Psoas muscle (tissue), 8 donors: ENCODE measurements at regions of chr7 and their contacts with region 1.

Region 1: GRCh38 chr7:37833107-37833817 is 15.1 kb upstream of the NME8 start:
- DNase-seq: peak; percentile 17 to 50
- ATAC-seq: peak in 2 of 4 donors; percentile 47 to 73
- H3K4me3 ChIP-seq: peak overlapping the region; percentile 50
- H3K27ac ChIP-seq: no peak overlapping the region
- H3K4me1 ChIP-seq: no peaks in the 10 kb centered on the region
- H3K27me3 ChIP-seq: no peaks in the 10 kb centered on the region
- CTCF ChIP-seq: peak; percentile 67

Region 2: DNA sequence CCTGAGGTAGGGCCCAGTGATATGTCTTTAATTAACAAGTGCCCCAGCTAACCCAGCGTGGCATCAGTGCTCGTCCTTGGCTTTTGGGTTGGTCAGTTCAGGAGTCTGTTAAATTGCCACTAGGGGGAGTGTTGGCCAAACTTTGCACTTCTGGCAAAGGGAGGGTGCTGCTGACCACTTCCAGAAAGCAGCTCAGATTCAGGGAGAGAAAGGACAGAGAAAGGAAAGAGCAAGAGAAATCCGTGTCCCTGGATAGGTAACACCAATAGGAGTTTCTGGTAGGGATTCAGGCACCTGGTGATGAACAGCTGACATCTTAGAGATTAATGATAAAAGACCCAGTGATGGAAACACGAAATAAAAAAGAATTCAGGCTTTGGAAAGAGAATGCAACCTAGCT is 865.9 kb before region 1 on chr7:
- intact Hi-C with region 1: loop called in 1 of 2 experiments (anchors 10 kb)
- DNase-seq: peak in 1 of 2 donors; percentile 36
- ATAC-seq: peak; percentile 75 to 93 (median 85)
- H3K4me3 ChIP-seq: no peak overlapping the region
- H3K27ac ChIP-seq: no peak overlapping the region
- H3K4me1 ChIP-seq: peaks cover 3% of the 10 kb centered on the region
- H3K27me3 ChIP-seq: no peaks in the 10 kb centered on the region
- CTCF ChIP-seq: peak; percentile 81

Region 3: DNA sequence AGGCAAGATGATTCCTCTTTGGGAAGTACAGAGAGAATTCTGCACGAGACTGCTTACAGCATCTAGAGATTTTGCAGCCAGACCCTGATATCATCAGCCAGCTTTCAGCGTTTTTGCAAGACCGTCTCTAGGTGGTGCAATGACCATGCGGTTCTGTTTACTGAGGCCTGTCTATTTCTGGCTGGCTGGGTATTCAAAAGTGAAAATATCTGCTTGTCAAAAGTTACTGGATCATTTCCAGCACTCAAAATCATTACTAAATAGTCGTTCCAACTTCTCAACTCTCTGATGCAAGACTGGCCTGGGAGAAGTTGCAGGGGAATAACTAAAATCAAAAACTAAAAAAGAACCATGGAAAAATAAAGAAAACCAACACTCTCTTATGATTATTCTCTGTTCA is 624.7 kb before region 1 on chr7:
- intact Hi-C with region 1: loop called in 1 of 2 experiments (anchors 5 kb)
- DNase-seq: peak; percentile 60 to 63
- ATAC-seq: peak; percentile 69 to 96 (median 91)
- H3K4me3 ChIP-seq: no peak overlapping the region
- H3K27ac ChIP-seq: no peak overlapping the region
- H3K4me1 ChIP-seq: peaks cover 5% of the 10 kb centered on the region
- H3K27me3 ChIP-seq: no peaks in the 10 kb centered on the region
- CTCF ChIP-seq: peak; percentile 21

Region 4: GRCh38 chr7:37234928-37235327 is 598.3 kb before region 1 on chr7:
- intact Hi-C with region 1: loop called in 1 of 2 experiments (anchors 10 kb)
- DNase-seq: no peak
- ATAC-seq: no peak
- H3K4me3 ChIP-seq: no peak overlapping the region
- H3K27ac ChIP-seq: no peak overlapping the region
- H3K4me1 ChIP-seq: no peaks in the 10 kb centered on the region
- H3K27me3 ChIP-seq: no peaks in the 10 kb centered on the region
- CTCF ChIP-seq: peak; percentile 36

Region 5: DNA sequence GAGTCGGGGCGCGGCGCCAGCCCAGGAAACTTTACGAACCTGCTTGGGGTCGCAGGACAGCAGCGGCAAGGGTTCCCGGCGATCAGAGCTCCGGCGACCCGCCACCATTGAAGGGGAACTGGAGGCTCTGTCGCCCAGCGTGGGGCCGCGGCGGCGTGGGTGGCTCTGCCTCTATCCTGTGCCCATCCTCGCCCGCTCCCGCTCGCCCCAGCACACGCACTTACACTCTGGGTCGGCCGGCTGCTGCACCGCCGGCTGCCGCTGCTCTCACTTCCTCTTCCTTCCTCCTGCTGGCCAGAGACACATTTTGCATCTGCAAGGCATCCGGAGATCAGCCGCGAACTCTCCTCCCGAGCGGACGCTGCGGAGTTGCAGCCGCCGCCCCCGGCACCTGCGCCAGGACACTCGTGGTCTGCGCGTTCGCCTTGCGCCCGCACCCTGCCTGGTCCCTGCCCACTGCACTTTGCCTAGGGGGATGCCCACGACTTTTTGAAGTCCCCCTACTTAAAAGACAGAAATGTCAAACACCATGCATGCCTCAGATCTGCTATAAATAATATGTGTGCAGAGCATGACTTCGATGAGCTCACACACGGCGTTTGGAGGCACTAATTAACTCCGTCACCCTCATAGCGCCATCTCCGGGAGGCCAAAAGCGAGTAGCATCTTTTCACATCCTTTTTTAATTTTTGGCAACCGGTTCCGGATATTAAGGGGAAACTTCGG is 384.5 kb before region 1 on chr7 and contains the start of gene ELMO1:
- intact Hi-C with region 1: loop called in 1 of 2 experiments (anchors 5 kb)
- DNase-seq: peak; percentile 76 to 84
- ATAC-seq: peak; percentile 56 to 79 (median 74)
- H3K4me3 ChIP-seq: peak within 1 kb of the TSS; percentile 74
- H3K27ac ChIP-seq: peak within 1 kb of the TSS; percentile 71
- H3K4me1 ChIP-seq: peaks cover 11% of the 10 kb centered on the region
- H3K27me3 ChIP-seq: peaks cover 0 to 20% (median 10%) of the 10 kb centered on the region in 3 donors
- CTCF ChIP-seq: peak; percentile 31
- total RNA-seq, gene ELMO1: 6.9 to 8.1 (median 7.3) TPM

Region 6: DNA sequence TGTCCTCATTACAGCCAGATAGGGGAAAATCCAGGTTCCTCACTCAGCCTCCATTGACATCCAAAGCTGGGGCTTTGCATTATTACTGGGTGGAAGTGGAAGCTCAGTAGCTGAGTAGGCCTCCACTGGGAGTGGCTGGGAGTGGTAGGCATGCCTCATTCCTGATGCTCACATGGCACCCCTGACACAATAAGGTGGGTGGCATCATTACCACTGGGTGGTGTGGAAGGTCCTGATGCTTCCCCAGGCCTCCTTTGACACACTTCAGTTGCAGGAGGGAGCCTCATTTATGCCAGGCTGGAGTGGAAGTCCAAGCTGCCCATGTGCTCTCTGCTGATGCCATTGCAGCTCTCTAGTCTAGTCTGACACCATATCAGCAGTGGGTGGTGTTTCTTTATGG is 197.9 kb before region 1 on chr7:
- intact Hi-C with region 1: loop called in 1 of 2 experiments (anchors 10 kb)
- DNase-seq: no peak
- ATAC-seq: no peak
- H3K4me3 ChIP-seq: no peak overlapping the region
- H3K27ac ChIP-seq: no peak overlapping the region
- H3K4me1 ChIP-seq: no peaks in the 10 kb centered on the region
- H3K27me3 ChIP-seq: no peaks in the 10 kb centered on the region
- CTCF ChIP-seq: no peak

Region 7: DNA sequence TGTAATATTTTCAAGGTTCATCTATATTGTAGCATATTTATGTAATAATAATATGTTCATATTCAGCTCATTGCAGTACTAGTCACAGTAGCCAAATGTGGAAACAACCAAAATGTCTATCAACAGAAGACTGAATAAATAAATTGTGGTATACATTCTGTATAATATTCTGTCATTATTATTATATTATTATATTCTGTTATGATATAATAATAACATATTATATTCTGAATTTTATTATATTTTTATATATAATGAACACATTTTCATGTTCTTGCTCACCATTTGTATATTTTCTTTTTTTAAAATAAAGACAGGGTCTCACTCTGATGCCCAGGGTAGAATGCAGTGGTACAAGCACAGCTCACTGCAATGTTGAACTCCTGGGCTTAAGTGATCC is 253.6 kb after region 1 on chr7:
- intact Hi-C with region 1: no loop called
- DNase-seq: no peak
- ATAC-seq: no peak
- H3K4me3 ChIP-seq: no peak overlapping the region
- H3K27ac ChIP-seq: no peak overlapping the region
- H3K4me1 ChIP-seq: no peaks in the 10 kb centered on the region
- H3K27me3 ChIP-seq: no peaks in the 10 kb centered on the region
- CTCF ChIP-seq: no peak